Activated CD4-positive, alpha-beta T cell treated with anti-CD3 and anti-CD28 coated beads for 36 hours (primary cell): ENCODE measurements at regions of chr1 and their contacts with region 1.

Region 1: DNA sequence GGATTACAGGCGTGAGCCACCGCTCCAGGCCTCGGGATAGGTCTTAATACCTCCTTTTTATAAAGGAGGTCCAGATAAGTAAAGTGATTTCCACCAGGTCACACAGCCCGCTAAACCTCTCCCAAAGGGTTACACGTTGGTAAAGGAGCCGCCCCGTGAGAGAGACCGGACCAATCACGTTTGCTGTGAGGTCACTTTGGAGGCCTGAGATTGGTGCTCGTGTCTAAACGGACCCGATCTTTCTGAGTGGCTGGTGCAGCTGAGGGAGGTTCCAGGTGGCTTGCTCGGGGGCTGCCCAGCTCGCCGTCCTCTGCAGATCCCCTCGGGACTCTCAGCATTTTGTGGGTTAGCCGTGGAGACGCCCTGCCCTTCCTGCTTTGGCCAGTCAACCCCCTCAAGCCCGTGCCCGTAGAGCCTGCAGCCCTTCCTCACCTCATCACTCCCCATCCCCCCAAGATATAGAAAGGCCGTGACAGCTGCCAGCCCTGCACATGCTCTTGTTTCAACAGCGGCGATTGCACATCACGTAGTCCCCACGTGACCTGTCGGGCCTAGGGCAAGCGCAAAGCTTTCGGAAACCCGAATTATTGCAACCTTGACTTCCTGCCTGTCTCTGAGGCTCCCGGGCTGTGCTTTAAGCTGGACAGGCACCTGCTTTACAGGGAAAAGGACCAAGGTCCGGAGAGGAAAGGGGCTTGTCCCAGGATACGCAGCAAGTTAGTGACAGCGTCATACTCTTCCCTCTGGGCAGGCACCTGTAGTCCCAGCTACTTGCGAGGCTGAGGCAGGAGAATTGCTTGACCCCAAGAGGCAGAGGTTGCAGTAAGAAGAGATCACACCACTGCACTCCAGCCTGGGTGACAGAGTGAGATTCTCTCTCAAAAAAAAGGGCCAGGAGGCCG is 5.0 kb upstream of the COA7 start:
- DNase-seq: peak; percentile 89
- ATAC-seq: peak; percentile 94
- H3K4me3 Mint-ChIP-seq: peak overlapping the region; percentile 79
- H3K27ac Mint-ChIP-seq: peak overlapping the region; percentile 93
- H3K4me1 Mint-ChIP-seq: peaks cover 16% of the 10 kb centered on the region
- H3K27me3 Mint-ChIP-seq: no peaks in the 10 kb centered on the region

Region 2: DNA sequence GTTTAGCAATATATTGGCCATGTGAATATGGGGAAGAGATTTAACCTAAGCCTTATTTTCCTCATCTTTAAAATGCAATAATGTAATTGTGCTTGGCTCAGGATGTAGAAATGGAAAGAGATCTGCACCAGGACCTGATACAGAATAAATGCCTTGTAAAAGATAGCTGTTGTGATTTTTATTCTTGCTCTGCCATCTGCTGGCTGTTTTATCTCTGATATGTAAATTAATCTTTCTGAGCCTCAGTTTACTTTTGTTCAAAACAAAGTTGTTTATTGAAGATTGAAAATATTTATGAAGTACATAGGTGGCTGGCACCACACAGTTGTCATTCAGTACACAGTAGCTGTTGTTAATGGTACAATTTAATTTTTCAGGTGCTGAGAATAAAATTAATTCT is 45.0 kb after region 1 on chr1:
- CTCF ChIA-PET with region 1: interaction called, 6 read pairs
- POLR2A ChIA-PET with region 1: no interaction called
- intact Hi-C with region 1: loop called (anchors 1 to 5 kb)
- DNase-seq: no peak
- ATAC-seq: no peak
- H3K4me3 Mint-ChIP-seq: no peak overlapping the region
- H3K27ac Mint-ChIP-seq: no peak overlapping the region
- H3K4me1 Mint-ChIP-seq: peaks cover 15% of the 10 kb centered on the region
- H3K27me3 Mint-ChIP-seq: no peaks in the 10 kb centered on the region

Region 3: GRCh38 chr1:52842643-52843309 is 139.6 kb after region 1 on chr1 and contains the start of gene ZYG11A:
- CTCF ChIA-PET with region 1: no interaction called
- POLR2A ChIA-PET with region 1: interaction called, 3 read pairs
- intact Hi-C with region 1: loop called in 1 of 2 experiments (anchors 1 kb)
- DNase-seq: peak; percentile 89
- ATAC-seq: peak; percentile 98
- H3K4me3 Mint-ChIP-seq: peak within 1 kb of the TSS; percentile 58
- H3K27ac Mint-ChIP-seq: no peak within 1 kb of the TSS
- H3K4me1 Mint-ChIP-seq: peaks cover 5% of the 10 kb centered on the region
- H3K27me3 Mint-ChIP-seq: peaks cover 18% of the 10 kb centered on the region
- total RNA-seq, gene ZYG11A: 0.11 to 0.25 TPM

Region 4: GRCh38 chr1:53014791-53015507 is 311.8 kb after region 1 on chr1:
- CTCF ChIA-PET with region 1: no interaction called
- POLR2A ChIA-PET with region 1: no interaction called
- intact Hi-C with region 1: loop called in 1 of 2 experiments (anchors 2 kb)
- DNase-seq: peak; percentile 84
- ATAC-seq: peak; percentile 99
- H3K4me3 Mint-ChIP-seq: peak overlapping the region; percentile 79
- H3K27ac Mint-ChIP-seq: peak overlapping the region; percentile 89
- H3K4me1 Mint-ChIP-seq: peaks cover 24% of the 10 kb centered on the region
- H3K27me3 Mint-ChIP-seq: no peaks in the 10 kb centered on the region

Region 5: DNA sequence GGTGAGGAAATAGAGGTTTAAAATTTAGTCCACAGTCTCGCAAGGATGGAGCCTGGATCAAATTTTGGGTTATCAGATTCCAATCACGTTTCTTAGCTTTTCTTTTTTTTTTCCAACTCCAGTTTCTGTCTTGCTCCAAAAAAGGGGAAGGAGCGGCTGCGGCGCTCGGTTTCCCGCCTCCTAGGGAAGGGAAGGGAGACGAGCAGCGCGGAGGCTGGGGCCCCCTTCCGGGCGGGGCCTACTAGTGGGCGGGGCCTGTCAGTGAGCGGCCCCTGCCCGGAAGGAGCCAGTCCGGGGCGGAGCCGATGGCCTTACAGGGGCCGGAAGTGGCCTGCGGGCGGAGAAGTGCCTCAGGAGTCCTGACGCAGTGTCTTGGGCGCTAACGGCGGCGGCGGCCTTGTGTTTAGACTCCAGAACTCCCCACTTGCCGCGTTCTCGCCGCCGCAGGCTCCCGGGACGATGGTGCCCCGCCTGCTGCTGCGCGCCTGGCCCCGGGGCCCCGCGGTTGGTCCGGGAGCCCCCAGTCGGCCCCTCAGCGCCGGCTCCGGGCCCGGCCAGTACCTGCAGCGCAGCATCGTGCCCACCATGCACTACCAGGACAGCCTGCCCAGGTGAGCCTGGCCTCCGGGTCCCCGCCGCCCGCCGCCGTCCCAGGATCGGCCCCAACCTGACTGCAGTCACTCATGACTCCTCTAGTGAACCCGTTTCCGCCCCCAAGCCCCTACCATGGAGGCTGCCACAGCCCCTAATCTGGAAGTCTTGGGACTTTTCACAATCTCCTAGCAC is 493.5 kb after region 1 on chr1 and contains the start of gene CPT2:
- CTCF ChIA-PET with region 1: no interaction called
- POLR2A ChIA-PET with region 1: no interaction called
- intact Hi-C with region 1: loop called (anchors 2 to 10 kb)
- DNase-seq: peak; percentile 96
- ATAC-seq: peak; percentile 98
- H3K4me3 Mint-ChIP-seq: peak within 1 kb of the TSS; percentile 98
- H3K27ac Mint-ChIP-seq: peak within 1 kb of the TSS; percentile 99
- H3K4me1 Mint-ChIP-seq: peaks cover 25% of the 10 kb centered on the region
- H3K27me3 Mint-ChIP-seq: no peaks in the 10 kb centered on the region
- total RNA-seq, gene CPT2: 20.7 to 23.7 TPM